Aorta (tissue), 5 donors: ENCODE measurements at regions of chr7 and their contacts with region 1.

Region 1: GRCh38 chr7:98841179-98841997 is 28.4 kb downstream of the TMEM130 start:
- DNase-seq: peak; percentile 70 to 91
- ATAC-seq: peak; percentile 90
- H3K4me3 ChIP-seq: no peak overlapping the region
- H3K27ac ChIP-seq: peak overlapping the region in 1 of 2 donors; percentile 37
- H3K4me1 ChIP-seq: peaks cover 0 to 4% of the 10 kb centered on the region in 2 donors
- H3K27me3 ChIP-seq: no peaks in the 10 kb centered on the region

Region 2: GRCh38 chr7:98251841-98252639 is 589.3 kb before region 1 on chr7 and contains the start of gene TECPR1:
- intact Hi-C with region 1: loop called in 1 of 2 experiments (anchors 10 kb)
- DNase-seq: peak; percentile 97 to 98
- ATAC-seq: peak; percentile 99
- H3K4me3 ChIP-seq: peak within 1 kb of the TSS; percentile 75 to 80
- H3K27ac ChIP-seq: peak within 1 kb of the TSS in 1 of 2 donors; percentile 39
- H3K4me1 ChIP-seq: no peaks in the 10 kb centered on the region
- H3K27me3 ChIP-seq: no peaks in the 10 kb centered on the region
- total RNA-seq, gene TECPR1: 33.8 to 48.0 TPM

Region 3: GRCh38 chr7:98434095-98434494 is 407.3 kb before region 1 on chr7:
- intact Hi-C with region 1: loop called (anchors 1 to 2 kb)
- DNase-seq: no peak
- ATAC-seq: no peak
- H3K4me3 ChIP-seq: no peak overlapping the region
- H3K27ac ChIP-seq: no peak overlapping the region
- H3K4me1 ChIP-seq: no peaks in the 10 kb centered on the region
- H3K27me3 ChIP-seq: no peaks in the 10 kb centered on the region

Region 4: DNA sequence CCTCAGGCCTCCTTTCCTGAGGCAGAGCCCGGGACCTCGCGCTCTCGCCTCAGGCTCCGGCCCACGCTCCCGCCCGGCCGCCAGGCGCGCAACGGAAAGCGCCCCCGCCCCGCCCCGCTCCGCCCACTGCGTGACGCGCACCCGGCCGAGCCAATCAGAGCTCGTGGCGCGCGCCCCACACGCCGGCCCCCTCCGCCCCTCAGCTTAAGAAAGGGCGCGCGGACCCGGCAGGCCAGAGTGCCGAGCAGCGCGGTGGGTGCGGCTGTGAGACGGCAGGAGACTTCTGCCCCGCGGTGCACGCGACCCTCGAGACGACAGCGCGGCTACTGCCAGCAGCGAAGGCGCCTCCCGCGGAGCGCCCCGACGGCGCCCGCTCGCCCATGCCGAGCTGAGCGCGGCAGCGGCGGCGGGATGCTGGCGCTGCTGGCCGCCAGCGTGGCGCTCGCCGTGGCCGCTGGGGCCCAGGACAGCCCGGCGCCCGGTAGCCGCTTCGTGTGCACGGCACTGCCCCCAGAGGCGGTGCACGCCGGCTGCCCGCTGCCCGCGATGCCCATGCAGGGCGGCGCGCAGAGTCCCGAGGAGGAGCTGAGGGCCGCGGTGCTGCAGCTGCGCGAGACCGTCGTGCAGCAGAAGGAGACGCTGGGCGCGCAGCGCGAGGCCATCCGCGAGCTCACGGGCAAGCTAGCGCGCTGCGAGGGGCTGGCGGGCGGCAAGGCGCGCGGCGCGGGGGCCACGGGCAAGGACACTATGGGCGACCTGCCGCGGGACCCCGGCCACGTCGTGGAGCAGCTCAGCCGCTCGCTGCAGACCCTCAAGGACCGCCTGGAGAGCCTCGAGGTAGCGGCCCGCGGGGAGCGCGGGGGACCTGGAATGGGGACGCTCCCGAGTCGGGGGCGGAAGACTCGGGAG is 224.1 kb before region 1 on chr7 and contains the start of gene NPTX2:
- intact Hi-C with region 1: loop called (anchors 5 kb)
- DNase-seq: peak; percentile 71 to 93
- ATAC-seq: peak; percentile 78
- H3K4me3 ChIP-seq: peak within 1 kb of the TSS; percentile 22 to 49
- H3K27ac ChIP-seq: no peak within 1 kb of the TSS
- H3K4me1 ChIP-seq: no peaks in the 10 kb centered on the region
- H3K27me3 ChIP-seq: no peaks in the 10 kb centered on the region
- total RNA-seq, gene NPTX2: 11.5 to 35.2 TPM

Region 5: GRCh38 chr7:98753989-98754479 is 87.4 kb before region 1 on chr7:
- intact Hi-C with region 1: loop called (anchors 2 to 5 kb)
- DNase-seq: peak in 1 of 2 donors; percentile 29
- ATAC-seq: no peak
- H3K4me3 ChIP-seq: no peak overlapping the region
- H3K27ac ChIP-seq: peak overlapping the region in 1 of 2 donors; percentile 19
- H3K4me1 ChIP-seq: no peaks in the 10 kb centered on the region
- H3K27me3 ChIP-seq: no peaks in the 10 kb centered on the region

Region 6: DNA sequence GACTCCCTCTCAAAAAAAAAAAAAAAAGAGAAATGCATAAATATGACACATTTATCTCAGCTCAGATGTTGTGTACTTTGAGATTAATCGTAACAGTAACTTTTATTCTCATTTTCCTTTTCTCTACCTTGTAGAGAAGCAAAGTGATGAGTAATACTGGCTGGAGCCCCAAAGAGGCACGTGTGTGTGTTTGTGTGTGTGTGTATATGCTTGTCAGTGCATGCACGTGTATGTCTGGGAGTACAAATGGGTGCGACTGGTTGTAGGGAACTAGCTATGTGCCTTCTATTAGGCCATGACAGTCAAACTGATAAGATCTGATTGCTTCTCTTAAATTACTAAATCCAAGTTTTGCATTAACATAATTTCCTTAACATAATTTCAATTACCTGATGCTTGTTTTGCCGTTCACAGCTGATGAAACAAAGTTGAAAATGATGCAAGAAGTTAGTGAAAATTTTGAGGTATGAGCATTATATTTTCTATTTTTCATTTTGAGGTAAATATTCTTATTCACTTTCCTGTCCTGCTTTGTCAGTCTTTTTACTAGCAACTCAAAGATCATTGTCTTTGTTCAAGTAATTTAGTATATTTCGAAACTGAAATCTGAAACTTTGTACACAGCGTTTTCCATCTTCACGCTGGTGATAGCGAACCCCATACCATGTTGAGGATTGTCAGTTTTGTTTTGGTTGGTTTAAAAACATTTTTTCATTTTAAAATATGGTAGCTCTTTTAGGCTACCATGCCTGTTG is 40.4 kb after region 1 on chr7:
- intact Hi-C with region 1: no loop called
- DNase-seq: no peak
- ATAC-seq: no peak
- H3K4me3 ChIP-seq: no peak overlapping the region
- H3K27ac ChIP-seq: no peak overlapping the region
- H3K4me1 ChIP-seq: no peaks in the 10 kb centered on the region
- H3K27me3 ChIP-seq: no peaks in the 10 kb centered on the region